Endothelial cell of umbilical vein (primary cell): ENCODE measurements at regions of chr10 and their contacts with region 1.

Region 1: DNA sequence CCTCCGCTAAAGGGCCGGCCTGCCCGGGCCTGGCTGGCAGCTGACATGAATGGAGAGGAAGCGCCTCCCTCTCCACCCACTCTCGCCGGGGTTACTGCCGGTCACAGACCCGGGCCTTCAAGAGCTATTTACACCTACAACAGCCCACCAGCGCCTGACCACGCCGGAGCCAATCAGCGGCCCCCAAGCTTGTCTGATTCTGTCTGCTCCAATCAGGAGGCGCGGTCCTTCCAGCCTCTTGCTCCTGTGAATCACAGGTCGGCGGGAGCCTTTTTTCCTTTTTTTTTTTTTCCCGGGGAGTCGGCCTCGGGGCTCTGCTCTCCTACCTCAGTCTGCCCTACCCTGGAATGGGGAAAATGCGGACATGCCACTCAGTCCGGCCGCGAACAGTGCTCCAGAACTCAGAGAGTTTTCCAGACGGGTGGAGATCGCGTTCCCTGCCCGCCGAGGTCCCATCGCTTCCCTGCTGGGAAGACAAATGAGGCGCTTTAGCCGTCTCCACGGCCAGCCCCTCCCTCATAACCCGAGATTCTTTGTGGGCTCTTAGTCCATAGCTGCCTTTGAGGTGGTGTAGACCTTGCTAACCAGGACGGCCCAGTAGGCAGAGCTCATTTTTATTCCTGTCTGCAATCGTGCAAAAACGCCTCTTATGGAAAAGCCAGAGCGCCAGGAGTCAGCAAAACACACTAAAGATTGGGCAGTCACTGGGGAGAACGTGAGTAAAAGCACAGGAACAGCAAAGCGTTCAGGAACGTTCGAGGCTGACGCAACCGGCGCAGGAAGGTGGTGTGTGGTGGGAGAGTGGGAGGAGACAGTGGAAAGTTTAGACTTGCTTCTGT is 26.5 kb downstream of the SCD start:
- DNase-seq: peak; percentile 99
- H3K4me3 ChIP-seq: peak overlapping the region; percentile 11 to 83 (median 45)
- H3K27ac ChIP-seq: peak overlapping the region; percentile 98
- H3K4me1 ChIP-seq: peaks cover 48% of the 10 kb centered on the region
- H3K27me3 ChIP-seq: no peaks in the 10 kb centered on the region
- CTCF ChIP-seq: no peak
- POLR2A ChIP-seq: peak; percentile 80

Region 2: GRCh38 chr10:100185364-100186252 is 187.9 kb before region 1 on chr10 and contains the start of gene ERLIN1:
- CTCF ChIA-PET with region 1: no interaction called
- POLR2A ChIA-PET with region 1: no interaction called
- dilution Hi-C with region 1: no loop called
- intact Hi-C with region 1: loop called (anchors 5 kb)
- DNase-seq: peak; percentile 95
- H3K4me3 ChIP-seq: peak within 1 kb of the TSS; percentile 51 to 89 (median 55)
- H3K27ac ChIP-seq: peak within 1 kb of the TSS; percentile 42
- H3K4me1 ChIP-seq: peaks cover 16% of the 10 kb centered on the region
- H3K27me3 ChIP-seq: no peaks in the 10 kb centered on the region
- CTCF ChIP-seq: peak in 1 of 2 donors; percentile 8
- POLR2A ChIP-seq: peak; percentile 88
- total RNA-seq, gene ERLIN1: 51.0 and 51.9 TPM in 2 replicates

Region 3: GRCh38 chr10:100338434-100339036 is 35.0 kb before region 1 on chr10:
- CTCF ChIA-PET with region 1: interaction called, 12 read pairs
- POLR2A ChIA-PET with region 1: no interaction called
- dilution Hi-C with region 1: no loop called
- intact Hi-C with region 1: no loop called
- DNase-seq: peak; percentile 63
- H3K4me3 ChIP-seq: no peak overlapping the region
- H3K27ac ChIP-seq: no peak overlapping the region
- H3K4me1 ChIP-seq: no peaks in the 10 kb centered on the region
- H3K27me3 ChIP-seq: peaks cover 7 to 8% of the 10 kb centered on the region in 2 experiments
- CTCF ChIP-seq: peak; percentile 81 to 88
- POLR2A ChIP-seq: no peak

Region 4: DNA sequence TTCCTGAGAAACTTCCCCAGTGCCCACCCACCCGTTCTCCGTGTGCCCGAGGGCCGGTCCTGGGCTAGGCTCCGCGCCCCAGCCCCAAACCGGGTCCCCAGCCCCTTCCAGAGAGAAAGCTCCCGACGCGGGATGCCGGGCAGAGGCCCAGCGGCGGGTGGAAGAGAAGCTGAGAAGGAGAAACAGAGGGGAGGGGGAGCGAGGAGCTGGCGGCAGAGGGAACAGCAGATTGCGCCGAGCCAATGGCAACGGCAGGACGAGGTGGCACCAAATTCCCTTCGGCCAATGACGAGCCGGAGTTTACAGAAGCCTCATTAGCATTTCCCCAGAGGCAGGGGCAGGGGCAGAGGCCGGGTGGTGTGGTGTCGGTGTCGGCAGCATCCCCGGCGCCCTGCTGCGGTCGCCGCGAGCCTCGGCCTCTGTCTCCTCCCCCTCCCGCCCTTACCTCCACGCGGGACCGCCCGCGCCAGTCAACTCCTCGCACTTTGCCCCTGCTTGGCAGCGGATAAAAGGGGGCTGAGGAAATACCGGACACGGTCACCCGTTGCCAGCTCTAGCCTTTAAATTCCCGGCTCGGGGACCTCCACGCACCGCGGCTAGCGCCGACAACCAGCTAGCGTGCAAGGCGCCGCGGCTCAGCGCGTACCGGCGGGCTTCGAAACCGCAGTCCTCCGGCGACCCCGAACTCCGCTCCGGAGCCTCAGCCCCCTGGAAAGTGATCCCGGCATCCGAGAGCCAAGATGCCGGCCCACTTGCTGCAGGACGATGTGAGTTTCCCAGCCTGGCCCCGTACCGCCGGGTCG is 26.6 kb before region 1 on chr10 and contains the start of gene SCD:
- CTCF ChIA-PET with region 1: interaction called, 20 read pairs
- POLR2A ChIA-PET with region 1: interaction called, 20 read pairs
- dilution Hi-C with region 1: no loop called
- intact Hi-C with region 1: loop called (anchors 1 kb)
- DNase-seq: peak; percentile 92
- H3K4me3 ChIP-seq: peak within 1 kb of the TSS; percentile 85 to 87 (median 85)
- H3K27ac ChIP-seq: peak within 1 kb of the TSS; percentile 48
- H3K4me1 ChIP-seq: peaks cover 42% of the 10 kb centered on the region
- H3K27me3 ChIP-seq: no peaks in the 10 kb centered on the region
- CTCF ChIP-seq: no peak
- POLR2A ChIP-seq: peak; percentile 83
- total RNA-seq, gene SCD: 396 and 426 TPM in 2 replicates

Region 5: DNA sequence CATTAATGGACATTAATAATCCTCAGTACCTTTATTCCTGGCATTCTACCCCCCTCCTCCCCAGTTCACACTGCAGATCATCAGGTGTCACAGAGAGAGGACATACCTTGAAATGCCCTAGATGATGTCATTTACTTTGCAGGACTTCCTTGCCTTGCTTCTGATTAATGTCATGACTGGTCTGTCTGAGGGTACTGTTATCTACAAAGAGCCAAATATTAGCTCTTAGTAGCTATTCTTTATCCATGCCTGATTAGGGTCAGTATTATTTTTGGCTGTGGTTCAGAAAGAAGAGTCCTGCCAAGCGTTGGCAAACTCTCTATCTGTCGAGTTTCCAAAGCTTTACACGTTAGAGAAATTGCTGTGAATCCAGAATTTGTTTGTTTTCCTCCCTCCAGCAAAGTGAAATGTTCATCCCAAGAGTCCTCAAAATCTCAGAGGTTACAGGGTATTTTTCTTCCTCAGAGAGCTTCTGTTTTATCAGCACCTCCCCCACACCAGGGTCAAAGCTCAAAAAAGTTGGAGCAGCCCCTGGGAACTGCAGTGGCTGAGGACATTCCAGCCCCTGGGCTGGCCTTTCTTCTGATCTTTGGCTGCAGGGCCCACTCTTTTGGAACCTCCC is 13.9 kb before region 1 on chr10:
- CTCF ChIA-PET with region 1: interaction called, 10 read pairs
- POLR2A ChIA-PET with region 1: interaction called, 3 read pairs
- dilution Hi-C with region 1: no loop called
- intact Hi-C with region 1: loop called (anchors 2 kb)
- DNase-seq: no peak
- H3K4me3 ChIP-seq: no peak overlapping the region
- H3K27ac ChIP-seq: peak overlapping the region; percentile 49
- H3K4me1 ChIP-seq: peaks cover 54% of the 10 kb centered on the region
- H3K27me3 ChIP-seq: no peaks in the 10 kb centered on the region
- CTCF ChIP-seq: no peak
- POLR2A ChIP-seq: no peak

Region 6: GRCh38 chr10:100562008-100562711 is 188.6 kb after region 1 on chr10:
- CTCF ChIA-PET with region 1: no interaction called
- POLR2A ChIA-PET with region 1: no interaction called
- dilution Hi-C with region 1: no loop called
- intact Hi-C with region 1: no loop called
- DNase-seq: peak; percentile 51
- H3K4me3 ChIP-seq: no peak overlapping the region
- H3K27ac ChIP-seq: no peak overlapping the region
- H3K4me1 ChIP-seq: peaks cover 2% of the 10 kb centered on the region
- H3K27me3 ChIP-seq: peaks cover 37 to 38% of the 10 kb centered on the region in 2 experiments
- CTCF ChIP-seq: peak; percentile 89 to 91
- POLR2A ChIP-seq: no peak

Region 7: GRCh38 chr10:100625816-100626215 is 252.3 kb after region 1 on chr10:
- CTCF ChIA-PET with region 1: no interaction called
- POLR2A ChIA-PET with region 1: no interaction called
- dilution Hi-C with region 1: no loop called
- intact Hi-C with region 1: no loop called
- DNase-seq: no peak
- H3K4me3 ChIP-seq: no peak overlapping the region
- H3K27ac ChIP-seq: no peak overlapping the region
- H3K4me1 ChIP-seq: no peaks in the 10 kb centered on the region
- H3K27me3 ChIP-seq: peaks cover 26 to 41% of the 10 kb centered on the region in 2 experiments
- CTCF ChIP-seq: no peak
- POLR2A ChIP-seq: no peak

Region 8: DNA sequence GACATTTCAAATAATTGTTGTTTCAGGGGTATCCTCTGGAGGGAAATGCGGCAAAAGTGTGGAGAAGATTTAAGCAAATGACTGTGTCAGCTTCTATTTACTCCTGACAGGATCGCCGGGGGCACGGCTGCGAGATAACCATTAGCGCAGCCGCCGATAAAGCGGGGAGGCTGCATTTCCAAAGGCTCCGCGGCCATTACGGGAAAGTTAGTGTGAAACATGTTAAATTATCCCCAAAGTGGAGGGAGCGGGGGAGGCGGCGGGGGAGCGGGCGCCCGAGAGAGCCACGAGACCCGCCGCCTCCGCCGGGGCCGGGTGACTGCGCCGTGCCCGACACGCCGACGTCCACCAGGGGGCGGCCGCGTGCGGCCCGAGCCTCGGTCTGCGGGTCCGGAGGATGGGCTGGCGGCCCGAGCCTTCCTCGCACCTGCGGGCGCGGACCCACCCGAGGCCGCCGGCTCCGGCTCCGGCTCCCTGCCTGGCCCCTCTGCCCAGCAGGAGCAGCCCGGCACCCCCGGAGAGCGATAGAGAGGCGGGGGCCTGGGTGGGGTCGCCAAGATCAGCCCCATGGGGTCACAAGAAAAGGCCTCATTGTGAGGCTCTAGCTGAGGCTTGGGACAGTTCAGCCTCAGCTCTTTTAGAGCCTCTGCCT is 297.4 kb after region 1 on chr10:
- CTCF ChIA-PET with region 1: no interaction called
- POLR2A ChIA-PET with region 1: no interaction called
- dilution Hi-C with region 1: no loop called
- intact Hi-C with region 1: no loop called
- DNase-seq: no peak
- H3K4me3 ChIP-seq: no peak overlapping the region
- H3K27ac ChIP-seq: no peak overlapping the region
- H3K4me1 ChIP-seq: no peaks in the 10 kb centered on the region
- H3K27me3 ChIP-seq: peaks cover 32 to 42% of the 10 kb centered on the region in 2 experiments
- CTCF ChIP-seq: peak; percentile 63 to 78
- POLR2A ChIP-seq: no peak

Region 9: DNA sequence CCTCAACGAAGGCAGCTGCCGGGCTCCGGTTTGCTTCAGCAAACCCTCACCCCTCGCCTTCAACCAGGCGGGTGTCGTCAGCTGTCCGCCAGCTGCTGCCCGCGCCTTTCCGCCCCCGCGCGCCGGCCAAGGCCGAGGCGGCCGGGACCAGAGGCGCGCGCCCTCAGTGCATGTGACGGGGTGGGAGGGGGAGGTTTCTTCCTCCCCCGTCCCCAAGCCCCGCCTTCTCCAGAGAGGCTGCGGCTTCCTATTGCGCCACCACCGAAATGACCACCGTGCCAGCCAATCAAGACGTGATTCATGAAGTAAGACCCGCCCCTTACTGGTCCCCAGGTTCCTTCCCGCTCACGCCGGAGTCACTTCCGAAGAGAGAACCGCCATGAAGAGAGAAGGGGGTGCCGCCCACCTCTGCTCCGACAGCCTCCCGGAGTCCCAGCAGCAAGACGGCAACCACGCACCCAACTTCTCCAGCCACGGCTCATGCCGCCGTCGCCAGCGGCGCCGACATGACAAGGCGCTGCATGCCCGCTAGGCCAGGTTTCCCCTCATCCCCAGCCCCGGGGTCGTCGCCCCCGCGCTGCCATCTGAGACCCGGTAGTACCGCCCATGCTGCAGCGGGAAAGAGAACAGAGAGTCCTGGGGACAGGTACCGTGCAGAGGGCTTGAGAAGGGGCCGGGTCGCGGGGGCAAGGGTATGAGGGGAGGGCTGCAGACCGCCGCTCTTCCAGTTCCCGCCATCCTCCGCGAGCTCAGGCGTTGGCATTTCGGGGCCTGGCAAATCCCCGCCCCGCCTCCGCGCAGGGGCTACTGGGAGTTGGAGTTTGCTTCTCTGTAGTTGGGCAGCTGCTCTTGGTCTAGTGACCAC is 539.3 kb after region 1 on chr10 and contains the start of gene SLF2:
- CTCF ChIA-PET with region 1: no interaction called
- POLR2A ChIA-PET with region 1: no interaction called
- dilution Hi-C with region 1: no loop called
- intact Hi-C with region 1: loop called (anchors 2 kb)
- DNase-seq: peak; percentile 99
- H3K4me3 ChIP-seq: peak within 1 kb of the TSS; percentile 52 to 99 (median 88)
- H3K27ac ChIP-seq: peak within 1 kb of the TSS; percentile 76
- H3K4me1 ChIP-seq: peaks cover 35% of the 10 kb centered on the region
- H3K27me3 ChIP-seq: no peaks in the 10 kb centered on the region
- CTCF ChIP-seq: no peak
- POLR2A ChIP-seq: peak; percentile 53
- total RNA-seq, gene SLF2: 28.0 and 35.5 TPM in 2 replicates